Dorsolateral prefrontal cortex (tissue), 120 donors: ENCODE measurements at regions of chr16 and their contacts with region 1.

Region 1: DNA sequence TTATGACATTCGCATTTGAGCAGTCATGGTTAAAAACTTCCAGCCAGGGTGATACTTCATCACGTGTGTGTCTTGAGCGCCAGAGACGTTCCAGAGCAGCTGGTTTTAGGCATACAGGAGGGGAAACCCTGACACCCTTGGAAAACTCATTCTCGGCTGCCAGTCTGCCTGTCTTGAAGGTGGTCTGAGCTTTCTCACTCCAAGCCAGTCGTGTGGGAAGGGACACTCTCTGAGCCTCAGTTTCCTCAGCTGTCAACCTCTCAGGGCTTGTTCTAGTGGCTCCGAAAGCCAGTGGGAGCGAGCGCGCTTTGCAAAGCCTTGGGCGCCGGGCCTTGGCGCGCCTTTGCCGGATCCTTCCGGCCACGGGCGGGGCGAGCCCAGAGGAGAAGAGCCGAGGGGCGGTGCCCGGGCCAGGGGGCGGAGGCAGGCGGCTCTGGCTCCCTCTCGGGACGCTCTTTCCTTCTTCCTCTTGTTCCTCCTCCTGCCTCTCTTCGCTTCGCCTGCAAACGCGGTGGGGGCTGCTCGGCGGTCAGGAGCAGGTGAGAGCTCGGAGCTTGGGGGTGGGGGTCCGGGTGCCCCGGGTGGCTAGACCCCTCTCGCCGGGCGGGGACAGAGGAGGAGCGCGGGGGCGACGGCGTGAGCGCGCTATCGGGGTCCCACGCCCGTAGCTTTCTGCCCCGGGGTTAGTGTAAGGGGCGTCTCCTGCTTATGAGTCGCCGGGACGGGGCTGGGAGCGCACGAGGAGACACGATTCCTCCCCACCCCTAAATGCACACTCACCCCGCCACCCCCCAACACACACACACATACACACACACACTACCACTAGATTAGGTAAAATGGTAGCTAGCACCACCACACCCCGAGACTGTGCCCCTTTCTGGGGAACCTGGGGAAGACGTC is at the start of gene LDAF1:
- DNase-seq: peak in 7 of 10 donors; percentile 25 to 78 (median 55)
- H3K4me3 ChIP-seq: peak within 1 kb of the TSS; percentile 39 to 76 (median 63)
- H3K27ac ChIP-seq: peak within 1 kb of the TSS in 6 of 59 donors; percentile 16 to 67 (median 50)
- H3K27me3 ChIP-seq: peaks cover 0 to 17% (median 0%) of the 10 kb centered on the region in 45 donors
- CTCF ChIP-seq: peak in 6 of 56 donors; percentile 8 to 19 (median 14)
- total RNA-seq, gene LDAF1: 1.5 to 14.0 (median 5.4) TPM

Region 2: DNA sequence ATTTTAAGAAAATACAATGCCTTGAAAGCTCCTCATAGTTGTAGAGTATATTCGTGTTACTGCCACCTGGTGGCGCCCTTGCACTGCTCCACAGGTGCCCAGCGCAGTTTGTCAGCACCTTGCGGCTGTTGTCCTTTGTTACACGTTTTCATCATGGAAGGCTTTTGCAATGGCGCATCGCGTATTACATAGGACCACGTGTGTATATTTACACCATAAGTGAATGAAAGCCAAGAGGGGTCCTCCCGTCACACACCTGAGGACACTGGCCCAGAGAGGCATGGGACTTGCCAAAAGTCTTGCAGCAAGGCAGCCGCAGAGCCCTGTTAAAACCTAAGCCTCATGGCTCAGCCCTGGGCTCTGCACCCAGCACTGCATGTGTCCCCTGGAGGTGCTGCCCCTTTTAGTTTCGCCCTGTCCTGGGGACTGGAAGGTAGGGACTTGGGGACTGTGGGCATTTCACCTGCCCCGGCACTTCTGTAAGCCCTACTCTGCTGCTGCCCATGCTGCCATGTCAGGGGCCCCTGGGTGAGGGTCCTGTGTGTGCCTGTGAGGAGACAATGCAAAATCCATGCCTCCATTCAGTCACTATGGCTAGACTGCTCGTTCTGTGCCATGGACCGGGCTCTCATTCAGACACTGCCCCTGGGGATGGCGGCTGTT is 1163.0 kb after region 1 on chr16:
- intact Hi-C with region 1: loop called in 1 of 2 experiments (anchors 10 kb)
- DNase-seq: peak; percentile 47 to 83 (median 74)
- H3K4me3 ChIP-seq: no peak overlapping the region
- H3K27ac ChIP-seq: peak overlapping the region in 4 of 59 donors; percentile 27 to 66 (median 35)
- H3K27me3 ChIP-seq: no peaks in the 10 kb centered on the region
- CTCF ChIP-seq: peak; percentile 65 to 94 (median 87)